ENCODE measurements at regions of chr7 and their contacts with region 1.

Region 1: DNA sequence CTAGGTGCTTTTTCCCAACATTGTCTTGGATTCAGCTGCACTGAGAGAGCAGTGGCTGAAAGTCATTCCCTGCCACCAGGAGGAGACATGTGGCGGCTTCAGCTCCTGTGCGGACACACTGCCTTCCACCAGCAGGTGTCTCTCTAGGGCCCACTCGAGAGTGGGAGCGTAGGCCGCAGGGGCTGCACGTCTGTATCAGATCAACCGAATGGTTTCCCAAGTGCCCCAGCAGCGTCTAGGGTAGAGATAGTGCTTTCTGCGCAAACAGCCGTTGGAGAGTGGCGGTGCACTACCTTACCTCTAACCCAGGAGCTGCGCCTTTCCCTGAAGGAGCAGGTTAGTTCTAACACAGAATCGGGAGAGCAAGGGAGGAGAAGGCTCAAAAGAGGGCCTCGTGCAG is 31.7 kb downstream of the PAPOLB start:
- DNase-seq: peak; percentile 77
- ATAC-seq: peak; percentile 84

Region 2: DNA sequence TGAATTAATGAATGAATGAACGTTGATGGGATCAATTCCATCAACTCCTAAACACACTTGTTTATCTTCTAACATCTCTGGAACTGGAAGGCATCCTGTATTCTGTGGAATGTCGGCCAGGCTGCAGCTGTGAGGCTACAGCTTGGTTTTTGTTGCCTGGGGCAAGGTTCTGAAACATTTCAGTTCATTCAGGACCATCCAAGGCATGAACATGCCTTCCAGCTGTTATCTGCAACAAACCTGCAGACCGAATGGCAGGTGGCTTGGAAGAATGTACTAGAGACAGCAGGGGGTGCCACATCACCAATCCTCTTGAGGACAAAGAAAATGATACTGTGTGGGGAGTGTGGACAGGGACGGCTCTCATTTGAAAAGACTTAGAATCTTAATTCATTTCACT is 19.2 kb after region 1 on chr7:
- intact Hi-C with region 1: no loop called
- DNase-seq: no peak
- ATAC-seq: no peak

Region 3: GRCh38 chr7:5713124-5713912 is 883.1 kb after region 1 on chr7:
- intact Hi-C with region 1: loop called (anchors 10 kb)
- DNase-seq: no peak
- ATAC-seq: peak; percentile 45

Measured in Right ventricle myocardium superior (tissue), 1 donor.